Panc1 (cell line): ENCODE measurements at regions of chr9 and their contacts with region 1.

Region 1: DNA sequence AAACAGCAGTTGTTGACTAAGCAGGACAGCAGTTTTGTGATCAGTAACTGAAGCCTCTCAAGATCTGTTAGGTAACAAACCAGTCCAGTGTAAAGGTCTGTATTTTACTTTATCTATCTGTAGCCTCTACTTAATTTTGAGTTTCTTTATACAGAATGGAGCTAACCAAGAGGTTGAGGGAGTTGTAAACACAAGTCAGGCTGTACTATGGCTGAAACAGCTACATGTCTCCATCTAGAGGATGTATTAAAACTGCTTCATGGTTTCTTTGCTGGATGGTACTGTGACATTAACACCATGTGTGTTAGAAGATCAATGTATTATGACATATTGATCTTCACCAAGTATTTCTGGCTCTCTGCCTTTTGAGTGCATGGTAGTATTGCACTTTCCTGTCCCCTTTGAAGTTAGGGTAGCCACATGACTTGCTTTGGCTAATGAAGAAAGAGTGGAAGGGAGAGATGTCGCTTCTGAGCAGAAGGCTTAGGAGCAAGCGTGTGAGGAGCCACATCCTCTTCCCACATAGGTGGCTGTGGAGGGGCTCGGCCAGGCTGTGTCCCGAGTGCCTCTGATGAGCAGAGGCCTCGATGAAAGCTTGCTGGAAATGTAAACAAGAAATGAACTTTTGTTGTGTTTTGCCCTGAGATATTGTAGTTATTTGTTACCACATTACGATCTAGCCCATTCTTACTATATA is 105.6 kb upstream of the PCA3 start:
- DNase-seq: no peak
- ATAC-seq: peak; percentile 82
- H3K4me3 ChIP-seq: no peak overlapping the region
- H3K27ac ChIP-seq: no peak overlapping the region
- H3K4me1 ChIP-seq: no peaks in the 10 kb centered on the region
- H3K27me3 ChIP-seq: no peaks in the 10 kb centered on the region; the same call in 1 of the 2 replicates
- CTCF ChIP-seq: peak; percentile 50; the same call in 1 of the 2 replicates

Region 2: DNA sequence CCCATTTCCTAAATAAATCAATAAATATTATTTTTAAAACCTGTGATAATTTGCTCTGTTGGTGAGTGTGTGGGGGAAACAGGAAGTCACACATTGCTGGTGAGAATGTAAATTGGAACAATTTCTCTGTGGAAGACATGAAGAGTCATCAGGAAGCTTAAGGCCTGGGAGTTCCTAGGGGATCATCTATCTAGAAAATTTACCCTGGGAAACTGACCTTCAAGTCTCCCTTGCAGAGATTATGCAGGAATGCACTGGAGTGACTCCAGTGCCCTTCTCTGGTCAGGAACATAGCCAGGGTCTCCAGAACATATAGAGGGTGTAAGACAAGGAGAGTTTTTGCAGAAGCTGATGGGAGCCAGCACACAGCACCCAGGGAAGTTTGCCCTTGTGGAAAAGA is 212.7 kb before region 1 on chr9:
- CTCF ChIA-PET with region 1: interaction called, 5 read pairs
- POLR2A ChIA-PET with region 1: no interaction called
- in situ Hi-C with region 1: no loop called
- intact Hi-C with region 1: loop called (anchors 1 kb)
- DNase-seq: no peak
- ATAC-seq: no peak
- H3K4me3 ChIP-seq: no peak overlapping the region
- H3K27ac ChIP-seq: no peak overlapping the region
- H3K4me1 ChIP-seq: no peaks in the 10 kb centered on the region
- H3K27me3 ChIP-seq: no peaks in the 10 kb centered on the region
- CTCF ChIP-seq: no peak